A549 (cell line): ENCODE measurements at regions of chr17 and their contacts with region 1.

Region 1: DNA sequence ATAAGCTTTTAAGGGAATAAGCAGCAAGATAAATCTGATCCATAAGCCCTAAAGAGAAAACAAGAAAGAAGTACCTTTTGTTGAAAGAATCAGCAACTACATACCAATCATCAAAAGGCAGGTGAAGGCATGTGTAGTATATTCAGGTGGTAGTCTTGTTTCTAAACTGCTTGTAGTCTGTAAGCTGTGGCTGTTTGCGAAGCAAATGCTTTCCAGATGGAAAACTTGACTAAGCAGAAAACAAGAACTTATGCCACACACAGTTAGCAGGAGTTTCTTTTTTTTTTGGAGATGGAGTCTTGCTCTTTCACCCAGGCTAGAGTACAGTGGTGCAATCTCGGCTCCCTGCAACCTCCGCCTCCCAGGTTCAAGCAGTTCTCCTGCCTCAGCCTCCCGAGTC is 5.7 kb downstream of the CBX1 start:
- DNase-seq: no peak
- ATAC-seq: no peak
- H3K4me3 ChIP-seq: no peak overlapping the region
- H3K27ac ChIP-seq: no peak overlapping the region
- H3K4me1 ChIP-seq: peaks cover 23% of the 10 kb centered on the region
- CTCF ChIP-seq: no peak
- EP300 ChIP-seq: no peak
- POLR2A ChIP-seq: no peak
- RAD21 ChIP-seq: no peak

Region 2: GRCh38 chr17:47864770-47865216 is 230.8 kb before region 1 on chr17:
- CTCF ChIA-PET with region 1: no interaction called
- POLR2A ChIA-PET with region 1: no interaction called
- DNase-seq: no peak
- ATAC-seq: no peak
- H3K4me3 ChIP-seq: no peak overlapping the region
- H3K27ac ChIP-seq: peak overlapping the region; percentile 19 to 38; a peak in 4 of 6 replicates
- H3K4me1 ChIP-seq: peaks cover 15% of the 10 kb centered on the region
- CTCF ChIP-seq: no peak
- EP300 ChIP-seq: no peak
- POLR2A ChIP-seq: no peak
- RAD21 ChIP-seq: no peak

Region 3: GRCh38 chr17:48107168-48108132 is 11.8 kb after region 1 on chr17 and contains the start of gene SNX11:
- CTCF ChIA-PET with region 1: interaction called, 22 read pairs
- POLR2A ChIA-PET with region 1: interaction called, 9 read pairs
- DNase-seq: peak; percentile 90 to 93
- ATAC-seq: peak; percentile 97 to 99
- H3K4me3 ChIP-seq: peak within 1 kb of the TSS; percentile 76
- H3K27ac ChIP-seq: peak within 1 kb of the TSS; percentile 91 to 92
- H3K4me1 ChIP-seq: peaks cover 9% of the 10 kb centered on the region
- CTCF ChIP-seq: no peak
- EP300 ChIP-seq: no peak
- POLR2A ChIP-seq: peak; percentile 78
- RAD21 ChIP-seq: no peak
- polyA plus RNA-seq, gene SNX11: 28.4 and 30.9 TPM in 2 replicates